Mucosa of descending colon (tissue), 3 donors: ENCODE measurements at regions of chr15 and their contacts with region 1.

Region 1: GRCh38 chr15:78241007-78241406 is 6.6 kb upstream of the ACSBG1 start:
- DNase-seq: peak; percentile 85 to 95 (median 93)
- ATAC-seq: peak; percentile 88
- H3K4me3 ChIP-seq: no peak overlapping the region
- H3K4me1 ChIP-seq: peaks cover 17% of the 10 kb centered on the region
- CTCF ChIP-seq: peak; percentile 79

Region 2: GRCh38 chr15:78108299-78109084 is 132.5 kb before region 1 on chr15:
- intact Hi-C with region 1: loop called in 1 of 2 experiments (anchors 5 kb)
- DNase-seq: peak; percentile 88 to 91 (median 91)
- ATAC-seq: peak; percentile 86
- H3K4me3 ChIP-seq: no peak overlapping the region
- H3K4me1 ChIP-seq: peaks cover 13% of the 10 kb centered on the region
- CTCF ChIP-seq: peak; percentile 86

Region 3: GRCh38 chr15:78131295-78132061 is 109.5 kb before region 1 on chr15 and contains the start of gene CIB2:
- intact Hi-C with region 1: loop called in 1 of 2 experiments (anchors 5 kb)
- DNase-seq: peak; percentile 75 to 88 (median 82)
- ATAC-seq: peak; percentile 91
- H3K4me3 ChIP-seq: peak within 1 kb of the TSS; percentile 34
- H3K4me1 ChIP-seq: peaks cover 17% of the 10 kb centered on the region
- CTCF ChIP-seq: peak; percentile 85
- total RNA-seq, gene CIB2: 8.1 to 13.7 (median 10.9) TPM

Region 4: GRCh38 chr15:78177447-78177873 is 63.5 kb before region 1 on chr15:
- intact Hi-C with region 1: loop called in 1 of 2 experiments (anchors 10 kb)
- DNase-seq: peak in 2 of 3 donors; percentile 66 to 68
- ATAC-seq: peak; percentile 49
- H3K4me3 ChIP-seq: no peak overlapping the region
- H3K4me1 ChIP-seq: no peaks in the 10 kb centered on the region
- CTCF ChIP-seq: no peak

Region 5: GRCh38 chr15:78195735-78196201 is 45.2 kb before region 1 on chr15:
- intact Hi-C with region 1: no loop called
- DNase-seq: peak in 2 of 3 donors; percentile 66 to 67
- ATAC-seq: peak; percentile 92
- H3K4me3 ChIP-seq: no peak overlapping the region
- H3K4me1 ChIP-seq: no peaks in the 10 kb centered on the region
- CTCF ChIP-seq: peak; percentile 57